ENCODE measurements at regions of chr22 and their contacts with region 1.

Region 1: GRCh38 chr22:37199103-37199759 is 11.2 kb upstream of the C1QTNF6 start:
- DNase-seq: peak; percentile 76
- H3K4me3 ChIP-seq: peak overlapping the region; percentile 78
- CTCF ChIP-seq: peak; percentile 99

Region 2: DNA sequence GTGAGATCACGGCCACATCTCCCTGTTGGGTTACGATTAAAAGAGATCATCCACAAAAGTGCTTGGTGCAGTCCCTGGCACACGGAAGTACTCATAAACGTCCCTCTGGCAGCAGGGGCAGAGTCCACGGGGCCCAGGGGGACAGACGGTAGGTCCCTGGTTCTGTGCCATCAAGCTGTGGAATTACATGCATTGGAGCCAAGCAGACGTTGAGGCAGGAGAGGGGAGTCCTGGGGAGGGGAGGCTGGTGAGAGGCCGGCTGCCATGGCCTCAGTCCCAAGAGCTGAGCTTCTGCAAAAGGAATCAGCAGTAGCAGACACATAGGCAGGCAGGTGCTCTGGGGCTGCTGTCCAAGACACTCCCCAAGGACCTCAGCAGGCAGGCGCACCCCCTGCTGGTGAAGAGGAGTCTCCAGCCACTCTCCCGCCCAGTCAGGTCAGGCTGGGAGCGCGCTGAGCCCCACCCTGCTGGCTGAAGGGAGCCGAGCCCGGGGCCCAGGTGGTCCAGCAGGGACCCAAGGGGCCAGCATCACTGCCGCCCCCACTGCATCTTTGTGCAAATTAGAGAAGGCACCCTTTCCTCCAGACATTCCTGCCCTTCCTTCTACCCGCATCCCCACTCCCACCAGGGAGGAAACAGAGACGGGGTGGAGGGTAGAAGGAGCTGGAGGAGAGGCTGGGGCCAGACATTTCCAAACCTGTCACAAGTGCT is 155.2 kb before region 1 on chr22:
- CTCF ChIA-PET with region 1: interaction called, 14 read pairs
- POLR2A ChIA-PET with region 1: no interaction called
- DNase-seq: no peak
- H3K4me3 ChIP-seq: no peak overlapping the region
- CTCF ChIP-seq: peak; percentile 62

Region 3: GRCh38 chr22:37154925-37155712 is 44.1 kb before region 1 on chr22:
- CTCF ChIA-PET with region 1: interaction called, 199 read pairs
- POLR2A ChIA-PET with region 1: no interaction called
- DNase-seq: no peak
- H3K4me3 ChIP-seq: no peak overlapping the region
- CTCF ChIP-seq: no peak

Region 4: GRCh38 chr22:37176218-37177091 is 22.8 kb before region 1 on chr22:
- CTCF ChIA-PET with region 1: interaction called, 144 read pairs
- POLR2A ChIA-PET with region 1: interaction called, 3 read pairs
- DNase-seq: no peak
- H3K4me3 ChIP-seq: no peak overlapping the region; the same call in none of the 2 replicates
- CTCF ChIP-seq: peak; percentile 14

Region 5: DNA sequence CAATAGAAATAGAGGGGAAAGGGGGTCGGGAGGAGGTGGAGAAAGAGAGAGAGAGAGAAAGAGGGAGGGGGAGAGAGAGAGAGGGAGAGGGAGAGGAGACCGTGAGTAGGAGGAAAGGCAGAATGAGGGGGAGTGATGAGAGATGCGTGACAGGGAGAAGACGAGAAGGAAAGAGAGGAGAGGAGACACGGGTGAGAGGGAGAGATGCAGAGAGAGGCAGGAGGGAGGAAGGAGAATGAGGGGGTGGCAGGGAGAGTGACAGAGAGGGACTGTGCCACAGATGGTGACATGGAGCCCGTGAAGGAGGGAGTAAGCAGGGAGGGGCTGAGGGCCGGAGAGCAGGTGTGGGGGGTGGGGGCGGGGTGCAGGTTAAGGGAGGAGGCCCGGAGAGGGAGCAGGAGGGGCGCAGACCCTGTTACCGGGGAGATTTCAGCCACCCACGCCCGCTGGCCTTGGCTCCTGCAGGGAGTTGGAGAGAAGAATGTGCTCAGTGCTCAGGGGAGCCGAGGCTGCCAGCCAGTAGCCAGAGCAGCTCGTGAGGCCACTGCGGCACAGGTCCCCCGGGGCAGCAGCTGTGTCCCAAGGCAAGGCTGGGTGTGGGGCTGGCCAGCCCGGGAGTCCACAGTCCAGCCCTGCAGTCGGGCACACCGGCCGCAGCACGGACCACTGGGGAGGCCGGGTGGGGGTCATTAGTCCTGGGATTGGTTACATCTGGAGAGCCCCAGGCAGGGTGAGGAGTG is 13.1 kb after region 1 on chr22 and contains the start of gene SSTR3:
- CTCF ChIA-PET with region 1: interaction called, 61 read pairs
- POLR2A ChIA-PET with region 1: no interaction called
- DNase-seq: no peak
- H3K4me3 ChIP-seq: no peak within 1 kb of the TSS
- CTCF ChIP-seq: no peak

Region 6: GRCh38 chr22:37229805-37230672 is 30.8 kb after region 1 on chr22:
- CTCF ChIA-PET with region 1: interaction called, 20 read pairs
- POLR2A ChIA-PET with region 1: no interaction called
- DNase-seq: no peak
- H3K4me3 ChIP-seq: no peak overlapping the region
- CTCF ChIP-seq: no peak

Region 7: DNA sequence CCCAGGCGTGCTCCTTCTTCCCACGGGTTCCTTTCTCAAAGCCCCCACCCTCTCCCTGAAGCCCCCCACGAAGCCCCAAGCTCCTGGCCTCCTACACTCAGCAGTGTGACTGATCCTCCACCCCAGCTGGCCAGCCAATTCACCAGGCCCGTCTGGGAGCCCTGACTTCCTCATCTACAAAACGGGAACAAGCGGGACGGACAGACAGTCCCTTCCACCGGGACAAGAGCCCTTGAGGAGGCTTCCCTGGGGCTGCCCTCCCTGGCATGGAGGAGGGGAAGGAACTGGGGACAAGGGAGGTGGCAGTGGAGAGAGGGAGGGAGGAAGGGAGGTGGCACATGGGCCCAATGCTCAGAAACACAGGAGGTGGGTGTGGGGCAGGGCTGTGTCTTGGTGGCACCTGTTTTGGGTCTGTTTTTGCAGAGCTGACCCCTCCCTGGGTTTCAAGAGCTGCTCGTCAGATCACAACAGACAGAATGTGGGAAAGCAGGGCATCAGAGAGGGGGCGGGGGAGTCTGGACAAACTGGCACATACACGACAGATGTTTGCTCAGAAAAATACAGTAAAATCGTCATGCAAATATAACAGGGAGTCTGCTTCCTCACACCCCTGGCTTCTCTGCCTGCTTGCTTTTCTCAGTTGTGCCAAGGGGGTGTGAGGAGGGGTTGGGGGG is 171.2 kb after region 1 on chr22:
- CTCF ChIA-PET with region 1: no interaction called
- POLR2A ChIA-PET with region 1: no interaction called
- DNase-seq: no peak
- H3K4me3 ChIP-seq: no peak overlapping the region
- CTCF ChIP-seq: no peak